Gastrocnemius medialis (tissue), 4 donors: ENCODE measurements at regions of chr18 and their contacts with region 1.

Region 1: DNA sequence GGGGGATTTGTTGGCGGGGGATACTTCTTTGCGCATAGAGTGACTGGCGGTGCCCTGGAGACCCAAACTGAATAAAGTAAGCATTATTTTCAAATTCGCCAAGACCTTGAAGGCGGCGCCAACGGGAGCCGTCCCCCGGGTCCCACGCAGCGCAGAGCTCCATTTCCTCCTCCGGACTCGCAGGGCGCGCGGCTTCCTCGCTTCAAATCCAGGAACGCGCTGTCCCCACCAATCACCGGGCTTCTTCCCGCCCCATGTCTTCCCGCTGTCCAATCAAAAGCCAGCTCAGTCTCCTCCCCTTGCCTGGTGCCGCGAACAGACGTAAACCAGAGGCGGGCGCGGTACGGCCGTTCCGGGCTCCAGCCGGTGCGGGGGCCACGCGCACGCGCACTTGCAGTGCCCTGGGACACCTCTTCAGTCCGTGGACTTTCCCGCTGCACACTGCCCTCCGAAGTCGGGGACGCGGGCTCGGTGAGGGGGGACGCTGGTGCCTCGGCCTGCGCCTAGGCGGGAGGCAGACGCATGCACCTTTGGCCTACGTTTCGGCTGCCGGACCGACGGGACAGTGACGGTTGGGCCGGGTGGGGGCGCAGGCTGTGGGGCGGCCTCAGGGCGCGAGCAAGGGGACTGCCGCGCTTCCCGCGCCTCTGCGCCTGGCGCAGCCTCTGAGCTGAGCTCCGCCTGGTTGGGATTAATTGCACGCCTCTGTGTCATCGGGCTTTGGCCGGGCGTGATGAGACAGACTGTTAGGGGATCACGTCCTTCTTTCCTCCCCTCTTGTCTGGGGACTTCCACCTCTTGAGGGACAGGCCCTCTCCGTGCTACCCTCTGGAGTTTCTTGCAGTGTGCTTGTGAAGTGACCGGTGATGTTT is at the start of gene CEP192:
- DNase-seq: peak; percentile 98
- ATAC-seq: peak; percentile 97
- H3K4me3 ChIP-seq: peak within 1 kb of the TSS; percentile 81 to 95 (median 90)
- H3K27ac ChIP-seq: peak within 1 kb of the TSS; percentile 87 to 93 (median 92)
- H3K4me1 ChIP-seq: peaks cover 33 to 47% of the 10 kb centered on the region in 2 donors
- H3K27me3 ChIP-seq: no peaks in the 10 kb centered on the region
- CTCF ChIP-seq: peak in 1 of 5 experiments; percentile 10
- POLR2A ChIP-seq: peak; percentile 84 to 94
- total RNA-seq, gene CEP192: 6.8 to 8.3 (median 7.3) TPM

Region 2: GRCh38 chr18:13003466-13003896 is 12.3 kb after region 1 on chr18:
- in situ Hi-C with region 1: no loop called
- intact Hi-C with region 1: no loop called
- DNase-seq: no peak
- ATAC-seq: no peak
- H3K4me3 ChIP-seq: no peak overlapping the region
- H3K27ac ChIP-seq: no peak overlapping the region
- H3K4me1 ChIP-seq: no peaks in the 10 kb centered on the region
- H3K27me3 ChIP-seq: no peaks in the 10 kb centered on the region
- CTCF ChIP-seq: no peak
- POLR2A ChIP-seq: no peak

Region 3: DNA sequence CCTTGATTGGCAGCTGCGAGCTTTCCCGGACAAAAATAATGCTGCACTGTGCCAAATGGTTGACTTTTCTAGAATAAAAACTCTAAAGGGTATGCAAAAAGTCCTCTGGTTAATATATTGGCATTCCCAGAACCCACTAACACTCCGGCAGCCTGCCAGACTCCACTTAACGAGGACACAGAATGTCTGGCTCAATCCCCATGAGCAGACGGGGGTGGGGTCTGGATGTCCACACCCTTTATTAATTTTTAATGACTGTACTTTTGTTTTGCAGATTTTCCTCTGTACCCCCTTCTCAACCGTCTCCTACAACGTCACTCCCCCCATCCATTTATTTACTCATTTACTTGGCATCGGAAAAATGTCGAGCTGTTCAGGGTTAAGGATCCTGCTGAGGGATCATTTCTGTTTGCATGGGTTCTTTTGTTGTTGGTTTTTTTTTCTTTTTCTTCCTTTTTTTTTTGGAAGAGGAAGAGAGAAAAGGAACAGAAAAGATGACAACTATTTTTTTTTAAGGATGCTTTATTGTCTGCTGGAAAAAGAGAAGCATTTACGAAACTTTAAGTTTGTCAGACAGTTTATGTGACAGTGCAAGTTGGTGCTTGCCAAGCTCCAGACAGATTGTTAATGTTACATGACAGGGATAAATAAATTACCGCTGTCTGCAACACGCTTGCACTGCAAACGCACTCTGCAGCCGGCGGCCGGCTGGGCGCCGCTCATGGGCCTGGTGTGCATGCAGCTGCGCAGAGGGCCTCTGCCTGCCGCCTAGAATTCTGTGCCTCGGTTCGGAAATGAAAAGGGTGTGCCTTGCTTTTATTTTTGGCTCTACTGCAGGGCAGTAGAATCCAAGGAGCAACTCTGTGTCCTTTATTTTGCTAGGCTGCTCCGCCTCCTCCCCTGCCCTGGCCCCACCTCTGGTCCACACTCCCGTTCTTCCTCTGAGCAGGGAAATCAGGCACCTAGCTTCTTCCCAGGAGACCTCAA is 231.0 kb after region 1 on chr18:
- in situ Hi-C with region 1: no loop called
- intact Hi-C with region 1: loop called (anchors 5 kb)
- DNase-seq: peak; percentile 30 to 58
- ATAC-seq: peak in 1 of 2 donors; percentile 42
- H3K4me3 ChIP-seq: peak overlapping the region; percentile 13 to 31 (median 25)
- H3K27ac ChIP-seq: peak overlapping the region; percentile 80 to 94 (median 82)
- H3K4me1 ChIP-seq: peaks cover 55 to 61% of the 10 kb centered on the region in 2 donors
- H3K27me3 ChIP-seq: no peaks in the 10 kb centered on the region
- CTCF ChIP-seq: no peak
- POLR2A ChIP-seq: peak in 1 of 2 donors; percentile 16